ENCODE measurements at regions of chr3 and their contacts with region 1.

Region 1: DNA sequence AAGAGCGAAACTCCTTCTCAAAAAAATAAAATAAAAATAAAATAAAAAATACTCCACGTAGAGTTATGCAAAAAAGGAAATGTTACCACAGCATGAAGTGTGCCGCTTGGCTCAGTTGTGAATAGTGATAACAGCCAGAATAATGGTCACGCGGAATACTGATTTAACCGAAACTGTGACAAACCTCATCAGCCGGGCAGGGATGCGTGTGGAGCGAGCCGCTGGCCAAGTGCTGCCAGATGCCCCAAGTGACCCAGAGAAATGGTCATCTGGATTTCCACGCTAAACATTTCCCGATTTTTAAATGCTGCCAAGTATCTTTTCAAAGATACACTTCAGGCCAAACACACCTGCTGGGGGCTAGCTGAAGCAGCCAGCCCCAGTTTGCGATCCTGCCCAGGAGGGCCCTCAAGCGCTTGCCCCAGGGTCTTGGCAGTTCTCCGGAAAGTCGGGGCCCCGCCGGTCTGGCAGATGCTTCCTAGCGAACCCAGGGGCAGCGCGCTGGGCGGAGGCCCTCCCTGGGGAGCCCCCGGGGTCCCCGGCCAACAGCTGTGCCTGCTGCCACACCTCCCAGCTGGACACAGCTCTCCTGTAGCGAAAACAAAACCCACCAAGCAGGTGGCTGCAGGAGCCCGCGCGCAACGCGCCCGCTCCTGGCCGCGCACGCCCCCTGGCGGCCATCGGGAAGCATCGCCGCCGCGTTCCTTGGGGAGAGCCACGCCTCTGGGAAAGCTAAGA is 35.1 kb downstream of the CMTM6 start:
- DNase-seq: peak; percentile 67 to 82 (median 70)
- H3K4me3 ChIP-seq: peak overlapping the region; percentile 43
- H3K4me3 Mint-ChIP-seq: peak overlapping the region in 6 of 7 donors; percentile 22 to 64 (median 32)
- H3K27ac ChIP-seq: peak overlapping the region; percentile 16
- H3K27ac Mint-ChIP-seq: peak overlapping the region in 4 of 8 donors; percentile 23 to 94 (median 66)
- H3K4me1 ChIP-seq: peaks cover 28% of the 10 kb centered on the region
- H3K4me1 Mint-ChIP-seq: peaks cover 13 to 58% (median 30%) of the 10 kb centered on the region in 3 donors
- H3K27me3 ChIP-seq: no peaks in the 10 kb centered on the region
- H3K27me3 Mint-ChIP-seq: no peaks in the 10 kb centered on the region

Region 2: DNA sequence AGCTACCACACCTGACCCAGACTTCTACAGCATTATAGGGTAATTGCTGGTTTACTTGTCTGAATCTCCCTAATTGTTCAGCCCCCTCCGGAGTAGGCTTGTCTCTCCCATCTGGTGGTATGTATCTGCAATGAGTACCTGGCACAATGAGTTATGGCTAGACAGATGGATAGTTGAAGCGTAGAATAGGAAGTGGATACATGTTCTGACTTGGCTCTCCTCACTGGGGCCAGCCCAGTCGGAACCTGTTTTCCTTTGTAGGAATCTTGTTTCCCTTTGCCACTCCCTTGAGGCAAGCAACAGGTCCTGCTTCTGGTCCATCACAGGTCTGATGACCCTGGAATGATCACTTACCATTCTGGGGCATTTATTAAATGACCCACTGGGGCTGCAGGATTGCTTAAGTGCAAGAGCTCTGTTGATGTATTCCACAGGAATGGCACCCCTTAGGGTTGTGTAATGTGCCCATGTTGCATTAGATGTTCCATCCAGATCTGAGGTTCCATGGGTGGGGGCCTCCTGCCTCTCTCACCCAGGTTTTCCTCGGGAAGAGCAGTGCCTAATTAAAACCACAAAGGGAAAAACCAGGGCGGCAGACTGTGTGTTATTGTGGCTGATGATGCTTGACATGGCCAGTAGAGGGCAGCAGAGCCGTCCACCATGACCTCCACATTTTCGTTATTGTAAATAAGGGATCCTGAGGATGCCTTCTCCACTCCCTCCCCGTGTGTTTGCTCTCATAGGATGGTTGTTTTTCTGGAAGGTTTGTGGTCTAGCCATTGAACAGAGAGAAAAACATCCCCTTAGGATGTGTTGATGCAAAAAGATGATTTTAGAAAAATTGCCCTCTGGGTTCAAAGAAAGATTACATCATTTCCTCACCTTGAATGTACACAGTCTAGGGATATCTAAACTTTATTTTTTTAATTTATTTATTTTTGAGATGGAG is 171.0 kb before region 1 on chr3:
- CTCF ChIA-PET with region 1: interaction called, 36 read pairs
- POLR2A ChIA-PET with region 1: interaction called, 3 read pairs
- DNase-seq: peak; percentile 31 to 67 (median 50)
- H3K4me3 ChIP-seq: peak overlapping the region; percentile 11
- H3K4me3 Mint-ChIP-seq: peak overlapping the region in 5 of 7 donors; percentile 27 to 69 (median 41)
- H3K27ac ChIP-seq: no peak overlapping the region
- H3K27ac Mint-ChIP-seq: peak overlapping the region in 7 of 8 donors; percentile 54 to 95 (median 76)
- H3K4me1 ChIP-seq: peaks cover 17% of the 10 kb centered on the region
- H3K4me1 Mint-ChIP-seq: peaks cover 12 to 24% (median 16%) of the 10 kb centered on the region in 3 donors
- H3K27me3 ChIP-seq: no peaks in the 10 kb centered on the region
- H3K27me3 Mint-ChIP-seq: peaks cover 0 to 2% of the 10 kb centered on the region in 2 donors

Region 3: DNA sequence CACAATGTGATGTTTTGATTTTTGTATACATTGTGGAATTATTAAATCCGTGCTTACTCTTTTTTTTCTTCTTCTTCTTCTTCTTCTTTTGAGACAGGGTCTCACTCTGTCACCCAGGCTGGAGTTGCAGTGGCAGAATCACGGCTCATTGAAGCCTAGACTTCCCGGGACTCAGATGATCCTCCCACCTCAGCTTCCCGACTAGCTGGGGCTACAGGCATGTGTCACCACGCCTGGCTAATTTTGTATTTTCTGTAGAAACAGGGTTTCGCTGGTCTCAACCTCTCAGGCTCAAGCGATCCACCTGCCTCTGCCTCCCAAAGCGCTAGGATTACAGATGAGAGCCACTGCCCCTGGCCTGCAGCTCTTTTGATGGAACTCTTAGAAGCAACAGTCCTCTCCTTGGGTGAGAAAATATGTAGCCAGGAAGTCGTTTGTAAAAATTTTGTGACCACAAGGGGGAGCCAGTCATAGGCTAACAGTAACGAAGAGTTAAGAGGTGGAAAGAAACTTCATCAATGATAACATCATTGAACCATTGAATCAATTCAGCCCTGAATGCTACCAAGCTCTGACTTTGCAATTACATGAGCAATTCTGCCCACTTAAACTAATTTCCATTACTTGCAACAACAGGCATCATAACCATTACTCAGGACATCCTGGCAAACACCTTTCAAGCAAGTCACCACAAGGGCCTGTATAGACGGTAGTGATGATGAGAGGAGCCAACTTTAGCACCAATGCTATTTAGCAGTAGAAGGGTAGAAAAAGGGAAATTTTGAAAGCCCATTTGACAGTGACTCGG is 92.5 kb before region 1 on chr3:
- CTCF ChIA-PET with region 1: interaction called, 199 read pairs
- POLR2A ChIA-PET with region 1: no interaction called
- DNase-seq: peak; percentile 37 to 77 (median 68)
- H3K4me3 ChIP-seq: no peak overlapping the region
- H3K4me3 Mint-ChIP-seq: no peak overlapping the region
- H3K27ac ChIP-seq: no peak overlapping the region
- H3K27ac Mint-ChIP-seq: peak overlapping the region in 2 of 8 donors; percentile 10 to 90
- H3K4me1 ChIP-seq: peaks cover 23% of the 10 kb centered on the region
- H3K4me1 Mint-ChIP-seq: peaks cover 11 to 23% (median 16%) of the 10 kb centered on the region in 3 donors
- H3K27me3 ChIP-seq: no peaks in the 10 kb centered on the region
- H3K27me3 Mint-ChIP-seq: no peaks in the 10 kb centered on the region

Region 4: DNA sequence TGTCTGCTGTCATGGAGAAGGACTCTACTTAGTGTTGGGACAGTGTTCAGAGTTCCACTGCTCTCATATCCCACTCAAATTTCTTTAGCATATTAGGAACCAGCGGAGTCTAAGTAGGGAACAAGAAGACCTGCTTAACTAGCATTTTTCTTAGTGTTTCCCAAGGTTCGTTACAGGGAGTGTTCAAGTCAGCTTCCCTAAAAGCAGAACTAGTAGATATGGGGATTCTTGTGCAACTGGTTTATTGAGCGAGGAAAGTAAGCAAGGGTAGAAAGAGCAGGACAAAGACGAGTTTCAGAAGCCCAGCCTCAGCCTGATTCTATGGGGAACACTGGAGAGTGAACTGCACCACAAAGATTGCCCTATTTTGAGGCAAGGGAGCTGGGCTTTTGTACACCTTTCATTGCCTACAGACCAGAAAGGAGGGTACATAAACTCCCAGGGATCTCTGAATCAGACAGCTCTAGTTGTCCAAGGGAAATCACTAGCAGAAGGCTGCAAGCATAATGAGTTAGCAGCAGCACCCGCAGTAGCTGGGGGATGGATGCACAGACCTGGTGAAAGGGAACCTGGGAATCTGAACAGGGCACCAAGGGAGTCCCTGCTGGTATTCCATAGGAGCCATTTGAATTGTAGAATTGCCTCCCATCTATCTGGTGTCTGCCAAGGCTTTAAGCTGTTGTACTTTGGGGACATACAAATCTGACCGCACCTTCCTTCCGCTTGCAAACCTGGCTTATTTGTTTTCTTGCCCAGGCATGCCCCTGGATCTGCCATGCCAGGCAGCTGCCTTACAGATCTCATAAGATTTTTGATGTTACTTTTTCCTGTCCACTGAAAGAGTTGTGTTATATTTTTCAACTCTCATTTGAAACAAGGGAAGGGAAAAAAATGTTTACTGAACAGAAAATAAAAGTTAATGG is 60.8 kb before region 1 on chr3:
- CTCF ChIA-PET with region 1: interaction called, 33 read pairs
- POLR2A ChIA-PET with region 1: no interaction called
- DNase-seq: no peak
- H3K4me3 ChIP-seq: no peak overlapping the region
- H3K4me3 Mint-ChIP-seq: no peak overlapping the region
- H3K27ac ChIP-seq: no peak overlapping the region
- H3K27ac Mint-ChIP-seq: peak overlapping the region in 4 of 8 donors; percentile 17 to 56 (median 53)
- H3K4me1 ChIP-seq: peaks cover 51% of the 10 kb centered on the region
- H3K4me1 Mint-ChIP-seq: peaks cover 38 to 93% (median 53%) of the 10 kb centered on the region in 3 donors
- H3K27me3 ChIP-seq: no peaks in the 10 kb centered on the region
- H3K27me3 Mint-ChIP-seq: no peaks in the 10 kb centered on the region

Region 5: DNA sequence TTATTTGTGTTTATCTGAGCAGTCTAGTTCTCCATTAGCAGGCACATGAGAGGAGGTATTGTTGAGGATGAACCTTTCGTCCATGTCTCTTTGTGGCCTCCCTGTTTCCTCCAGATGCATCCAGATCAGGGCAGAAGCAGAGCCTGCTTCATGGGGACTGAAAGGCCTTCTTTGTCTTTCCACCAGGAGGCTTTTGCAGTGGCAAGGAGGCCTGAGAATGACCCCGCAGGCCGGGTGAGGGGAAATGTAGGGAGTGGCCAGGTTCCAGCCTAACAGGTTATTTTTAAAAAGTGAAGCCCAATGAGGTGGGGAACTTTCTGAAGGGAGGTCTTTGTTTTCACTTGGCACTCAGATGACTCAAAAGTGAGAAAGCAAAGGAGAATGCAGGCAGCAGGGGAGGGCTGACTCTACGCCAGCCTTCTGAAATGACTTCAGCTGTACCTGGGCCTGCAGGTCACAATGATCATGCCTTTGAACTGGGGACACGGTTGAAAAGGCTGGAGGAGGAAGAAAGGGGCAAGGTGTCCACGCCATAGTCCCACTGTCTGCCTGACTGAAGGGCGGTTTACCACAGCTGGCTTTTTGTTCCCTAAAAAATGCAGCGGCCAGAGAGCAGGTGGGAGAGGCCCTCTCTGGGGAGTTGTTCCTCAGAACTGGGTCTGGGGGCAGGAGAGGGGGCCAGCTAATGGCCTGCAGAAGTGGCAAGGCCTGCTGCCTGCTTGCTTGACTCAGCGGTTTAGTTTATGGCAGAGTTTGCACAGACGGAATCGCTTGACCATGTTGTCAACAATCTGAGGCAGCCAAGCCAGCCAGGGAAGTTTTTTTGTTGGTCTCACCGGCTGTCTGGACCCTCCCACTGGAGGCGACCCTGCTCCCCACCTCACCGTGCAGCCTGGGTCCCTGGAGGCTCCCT is 47.1 kb before region 1 on chr3:
- CTCF ChIA-PET with region 1: interaction called, 81 read pairs
- POLR2A ChIA-PET with region 1: interaction called, 4 read pairs
- DNase-seq: peak in 1 of 5 donors; percentile 57
- H3K4me3 ChIP-seq: no peak overlapping the region
- H3K4me3 Mint-ChIP-seq: peak overlapping the region in 5 of 7 donors; percentile 13 to 88 (median 47)
- H3K27ac ChIP-seq: no peak overlapping the region
- H3K27ac Mint-ChIP-seq: peak overlapping the region; percentile 51 to 98 (median 78)
- H3K4me1 ChIP-seq: peaks cover 94% of the 10 kb centered on the region
- H3K4me1 Mint-ChIP-seq: peaks cover 68 to 98% (median 82%) of the 10 kb centered on the region in 3 donors
- H3K27me3 ChIP-seq: no peaks in the 10 kb centered on the region
- H3K27me3 Mint-ChIP-seq: peaks cover 0 to 3% of the 10 kb centered on the region in 2 donors

Region 6: GRCh38 chr3:32438596-32439344 is 28.7 kb before region 1 on chr3:
- CTCF ChIA-PET with region 1: interaction called, 38 read pairs
- POLR2A ChIA-PET with region 1: no interaction called
- DNase-seq: no peak
- H3K4me3 ChIP-seq: no peak overlapping the region
- H3K4me3 Mint-ChIP-seq: peak overlapping the region; percentile 6 to 83 (median 64)
- H3K27ac ChIP-seq: no peak overlapping the region
- H3K27ac Mint-ChIP-seq: peak overlapping the region; percentile 82 to 95 (median 89)
- H3K4me1 ChIP-seq: peaks cover 49% of the 10 kb centered on the region
- H3K4me1 Mint-ChIP-seq: peaks cover 56 to 91% (median 60%) of the 10 kb centered on the region in 3 donors
- H3K27me3 ChIP-seq: no peaks in the 10 kb centered on the region
- H3K27me3 Mint-ChIP-seq: peaks cover 0 to 2% of the 10 kb centered on the region in 2 donors

Region 7: DNA sequence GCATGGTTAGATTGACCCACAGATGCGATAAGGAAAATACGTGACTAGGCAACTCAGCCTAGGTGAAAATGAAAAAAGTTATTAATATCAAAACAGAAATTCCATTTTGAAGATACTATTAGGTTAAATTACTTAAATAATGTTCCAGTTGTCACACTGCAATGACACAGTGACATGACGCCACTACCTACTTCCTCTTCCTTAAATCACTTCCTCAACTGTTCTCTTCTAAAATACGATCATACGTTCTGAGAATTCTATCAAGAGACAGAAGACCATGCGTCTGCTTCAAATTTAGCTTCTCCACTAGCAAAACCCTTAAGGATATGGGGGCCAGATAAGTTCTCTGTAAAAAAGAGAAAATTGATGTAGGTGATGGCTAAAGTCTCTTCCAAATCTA is 16.9 kb after region 1 on chr3:
- CTCF ChIA-PET with region 1: interaction called, 18 read pairs
- POLR2A ChIA-PET with region 1: no interaction called
- DNase-seq: no peak
- H3K4me3 ChIP-seq: no peak overlapping the region
- H3K4me3 Mint-ChIP-seq: no peak overlapping the region
- H3K27ac ChIP-seq: no peak overlapping the region
- H3K27ac Mint-ChIP-seq: peak overlapping the region in 1 of 8 donors; percentile 27
- H3K4me1 ChIP-seq: no peaks in the 10 kb centered on the region
- H3K4me1 Mint-ChIP-seq: peaks cover 12 to 42% (median 36%) of the 10 kb centered on the region in 3 donors
- H3K27me3 ChIP-seq: no peaks in the 10 kb centered on the region
- H3K27me3 Mint-ChIP-seq: no peaks in the 10 kb centered on the region

Region 8: DNA sequence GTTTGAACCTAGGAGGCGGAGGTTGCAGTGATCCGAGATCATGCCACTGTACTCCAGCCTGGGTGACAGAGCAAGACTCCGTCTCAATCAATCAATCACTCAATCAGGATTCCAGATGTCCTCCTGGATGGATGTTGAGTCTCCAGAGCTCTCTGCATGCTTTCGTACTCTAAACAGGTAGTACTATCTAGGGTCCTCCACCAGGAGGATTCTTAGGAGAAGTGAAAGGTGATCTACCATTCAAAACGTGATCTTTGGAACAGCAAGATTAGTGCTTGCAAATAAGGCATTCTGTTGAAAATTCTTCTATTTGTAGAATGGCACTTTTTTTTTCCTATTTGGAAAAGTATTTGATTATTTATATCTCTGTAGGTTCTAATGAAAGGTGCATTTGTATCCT is 251.8 kb after region 1 on chr3:
- CTCF ChIA-PET with region 1: no interaction called
- POLR2A ChIA-PET with region 1: no interaction called
- DNase-seq: no peak
- H3K4me3 ChIP-seq: no peak overlapping the region
- H3K4me3 Mint-ChIP-seq: no peak overlapping the region
- H3K27ac ChIP-seq: no peak overlapping the region
- H3K27ac Mint-ChIP-seq: no peak overlapping the region
- H3K4me1 ChIP-seq: no peaks in the 10 kb centered on the region
- H3K4me1 Mint-ChIP-seq: no peaks in the 10 kb centered on the region
- H3K27me3 ChIP-seq: no peaks in the 10 kb centered on the region
- H3K27me3 Mint-ChIP-seq: no peaks in the 10 kb centered on the region

Measured in CD8-positive, alpha-beta memory T cell (primary cell).